ENCODE measurements at regions of chr4 and their contacts with region 1.

Region 1: DNA sequence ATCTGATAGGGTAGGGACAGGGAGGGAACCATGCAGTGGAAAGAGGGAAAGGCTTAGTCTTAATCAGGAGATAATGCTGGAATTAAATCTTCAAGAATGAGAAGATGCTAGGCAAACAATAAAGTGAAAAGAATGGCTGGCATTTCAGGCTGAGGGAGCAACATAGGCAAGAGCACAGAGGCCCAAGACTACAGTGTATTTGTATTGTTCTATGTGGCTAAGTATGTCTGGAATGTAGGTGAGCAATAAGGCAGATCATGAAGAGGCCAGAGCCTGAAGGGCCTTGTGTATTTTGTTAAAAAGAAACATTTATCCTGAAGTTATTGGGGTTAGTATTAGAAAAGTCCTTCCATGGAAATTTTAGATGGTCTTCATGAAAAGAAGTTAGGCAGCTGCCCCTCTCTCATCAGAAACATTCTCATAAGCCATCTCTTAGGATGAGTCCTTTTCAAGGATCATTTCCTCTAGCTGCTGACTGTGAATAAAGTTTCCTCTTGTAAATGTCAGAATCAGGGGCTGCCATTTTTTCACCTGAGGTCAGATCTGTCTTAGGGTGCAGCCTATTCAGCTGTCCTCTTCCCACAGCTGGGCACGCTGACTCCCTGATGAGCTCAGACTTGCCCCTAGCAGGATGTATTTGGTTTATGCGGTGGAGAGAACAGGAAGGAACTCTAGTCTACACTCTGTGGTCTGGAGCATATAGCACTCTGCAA is 46.3 kb downstream of the ATP10D start:
- DNase-seq: peak; percentile 94
- H3K4me3 ChIP-seq: no peak overlapping the region
- H3K27ac ChIP-seq: peak overlapping the region; percentile 77
- H3K4me1 ChIP-seq: peaks cover 64% of the 10 kb centered on the region
- H3K27me3 ChIP-seq: no peaks in the 10 kb centered on the region
- CTCF ChIP-seq: no peak

Region 2: GRCh38 chr4:47463235-47463956 is 68.0 kb before region 1 on chr4 and contains the start of gene COMMD8:
- CTCF ChIA-PET with region 1: no interaction called
- dilution Hi-C with region 1: no loop called
- in situ Hi-C with region 1: no loop called
- intact Hi-C with region 1: loop called (anchors 1 kb)
- DNase-seq: peak; percentile 94
- H3K4me3 ChIP-seq: peak within 1 kb of the TSS; percentile 64 to 79 (median 73)
- H3K27ac ChIP-seq: peak within 1 kb of the TSS; percentile 80
- H3K4me1 ChIP-seq: peaks cover 13% of the 10 kb centered on the region
- H3K27me3 ChIP-seq: no peaks in the 10 kb centered on the region
- CTCF ChIP-seq: peak in 1 of 2 donors; percentile 35
- total RNA-seq, gene COMMD8: 27.2 to 29.5 TPM

Region 3: DNA sequence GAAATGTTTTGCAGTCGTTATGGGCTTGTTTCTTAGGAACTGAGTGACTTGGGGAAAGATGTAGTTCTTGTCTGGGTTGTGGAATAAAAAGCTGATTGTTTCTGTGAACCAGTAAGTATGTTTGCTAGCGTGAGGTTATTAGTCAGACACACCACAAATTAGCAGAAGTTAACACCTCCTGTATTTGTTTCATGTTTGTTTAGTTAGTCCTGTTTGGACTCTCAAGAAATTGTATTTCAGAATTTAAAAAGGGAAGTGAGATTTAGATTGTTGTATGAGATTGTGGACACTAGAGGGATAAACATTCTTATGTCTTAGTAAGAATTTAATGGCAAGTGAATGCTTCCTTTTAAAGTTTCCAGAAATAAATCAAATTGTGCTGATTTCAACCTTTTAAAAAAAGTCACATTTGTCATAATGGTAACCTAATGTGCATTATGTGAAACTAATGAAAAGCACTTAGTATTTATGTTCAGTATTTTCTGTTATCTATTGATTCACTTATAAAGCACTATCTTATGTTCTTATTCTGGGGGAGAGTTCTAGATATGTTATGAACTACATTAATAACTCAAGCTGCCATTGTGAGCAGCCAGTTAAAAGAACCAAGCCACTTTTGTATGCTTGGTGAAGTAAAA is 20.8 kb before region 1 on chr4:
- CTCF ChIA-PET with region 1: no interaction called
- dilution Hi-C with region 1: no loop called
- in situ Hi-C with region 1: no loop called
- intact Hi-C with region 1: loop called (anchors 2 kb)
- DNase-seq: no peak
- H3K4me3 ChIP-seq: no peak overlapping the region
- H3K27ac ChIP-seq: peak overlapping the region; percentile 13
- H3K4me1 ChIP-seq: peaks cover 20% of the 10 kb centered on the region
- H3K27me3 ChIP-seq: no peaks in the 10 kb centered on the region
- CTCF ChIP-seq: peak; percentile 19 to 34

Region 4: DNA sequence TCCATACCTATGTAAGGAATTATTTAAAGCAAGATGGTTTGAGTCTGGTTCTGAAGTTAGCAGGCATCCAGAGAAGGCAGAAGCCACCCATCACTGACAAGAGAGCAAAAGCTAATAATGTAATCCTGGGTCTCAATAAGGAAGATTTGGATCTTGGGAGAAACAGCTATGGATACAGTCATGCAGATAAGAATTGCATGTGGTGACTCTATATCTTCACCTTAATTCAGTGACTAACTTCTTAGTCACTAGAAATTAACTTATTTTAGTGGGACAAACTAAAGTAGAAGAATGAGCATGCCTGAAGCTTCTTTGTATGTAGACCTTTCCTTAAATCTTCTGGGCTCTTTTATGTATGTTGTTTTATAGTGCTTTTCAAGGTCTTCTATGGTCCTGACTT is 20.3 kb after region 1 on chr4:
- CTCF ChIA-PET with region 1: interaction called, 3 read pairs
- dilution Hi-C with region 1: no loop called
- in situ Hi-C with region 1: no loop called
- intact Hi-C with region 1: loop called (anchors 2 kb)
- DNase-seq: peak; percentile 51
- H3K4me3 ChIP-seq: no peak overlapping the region
- H3K27ac ChIP-seq: peak overlapping the region; percentile 21
- H3K4me1 ChIP-seq: peaks cover 35% of the 10 kb centered on the region
- H3K27me3 ChIP-seq: no peaks in the 10 kb centered on the region
- CTCF ChIP-seq: no peak

Measured in mammary epithelial cell (primary cell).